Activated naive CD4-positive, alpha-beta T cell treated with anti-CD3 and anti-CD28 coated beads for 36 hours (primary cell): ENCODE measurements at regions of chr3 and their contacts with region 1.

Region 1: GRCh38 chr3:138271189-138271794 is 58.4 kb downstream of the NME9 start:
- DNase-seq: no peak
- H3K4me3 Mint-ChIP-seq: no peak overlapping the region
- H3K27ac Mint-ChIP-seq: peak overlapping the region; percentile 67
- H3K4me1 Mint-ChIP-seq: peaks cover 11% of the 10 kb centered on the region
- H3K27me3 Mint-ChIP-seq: no peaks in the 10 kb centered on the region

Region 2: GRCh38 chr3:138234401-138235179 is 36.7 kb before region 1 on chr3:
- CTCF ChIA-PET with region 1: interaction called, 3 read pairs
- intact Hi-C with region 1: loop called (anchors 1 kb)
- DNase-seq: no peak
- H3K4me3 Mint-ChIP-seq: no peak overlapping the region
- H3K27ac Mint-ChIP-seq: no peak overlapping the region
- H3K4me1 Mint-ChIP-seq: peaks cover 25% of the 10 kb centered on the region
- H3K27me3 Mint-ChIP-seq: no peaks in the 10 kb centered on the region

Region 3: GRCh38 chr3:138296639-138297038 is 25.3 kb after region 1 on chr3:
- CTCF ChIA-PET with region 1: interaction called, 3 read pairs
- intact Hi-C with region 1: loop called (anchors 1 kb)
- DNase-seq: peak; percentile 74
- H3K4me3 Mint-ChIP-seq: peak overlapping the region; percentile 15
- H3K27ac Mint-ChIP-seq: peak overlapping the region; percentile 88
- H3K4me1 Mint-ChIP-seq: peaks cover 38% of the 10 kb centered on the region
- H3K27me3 Mint-ChIP-seq: no peaks in the 10 kb centered on the region